Caco-2 (cell line): ENCODE measurements at regions of chr20 and their contacts with region 1.

Region 1: DNA sequence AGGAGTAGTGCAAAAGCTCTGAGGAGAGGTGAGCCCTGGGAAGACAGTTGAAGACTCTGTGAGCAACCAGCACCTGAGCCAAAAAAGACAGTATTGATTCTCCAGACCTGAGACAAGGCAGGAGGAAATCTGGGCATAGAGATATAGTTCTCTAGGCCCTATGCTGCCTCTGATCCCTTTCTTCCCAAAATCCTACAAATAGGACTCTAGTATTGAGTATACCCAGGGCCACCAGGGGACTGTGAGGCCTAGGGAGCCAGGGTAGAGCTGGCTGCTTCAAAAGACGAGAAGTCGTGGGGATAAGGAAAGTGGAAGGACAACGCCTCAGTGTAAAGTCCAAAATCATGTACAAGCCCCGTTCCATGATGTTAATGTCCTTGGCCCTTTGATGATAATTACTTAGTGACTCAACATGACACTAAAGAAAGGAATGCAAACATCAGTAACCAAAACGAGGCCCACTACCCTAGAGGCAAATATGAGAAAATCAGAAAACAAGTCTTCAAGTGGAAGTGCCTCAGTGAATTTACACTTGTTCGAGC is 197.3 kb upstream of the PROKR2 start:
- DNase-seq: peak; percentile 84 to 89
- H3K4me3 ChIP-seq: no peak overlapping the region
- H3K4me3 Mint-ChIP-seq: peak overlapping the region; percentile 55
- H3K27ac Mint-ChIP-seq: peak overlapping the region; percentile 95
- H3K4me1 ChIP-seq: peaks cover 27% of the 10 kb centered on the region
- H3K4me1 Mint-ChIP-seq: peaks cover 8% of the 10 kb centered on the region
- H3K27me3 ChIP-seq: no peaks in the 10 kb centered on the region
- H3K27me3 Mint-ChIP-seq: no peaks in the 10 kb centered on the region
- CTCF ChIP-seq: peak in 1 of 2 experiments; percentile 35

Region 2: DNA sequence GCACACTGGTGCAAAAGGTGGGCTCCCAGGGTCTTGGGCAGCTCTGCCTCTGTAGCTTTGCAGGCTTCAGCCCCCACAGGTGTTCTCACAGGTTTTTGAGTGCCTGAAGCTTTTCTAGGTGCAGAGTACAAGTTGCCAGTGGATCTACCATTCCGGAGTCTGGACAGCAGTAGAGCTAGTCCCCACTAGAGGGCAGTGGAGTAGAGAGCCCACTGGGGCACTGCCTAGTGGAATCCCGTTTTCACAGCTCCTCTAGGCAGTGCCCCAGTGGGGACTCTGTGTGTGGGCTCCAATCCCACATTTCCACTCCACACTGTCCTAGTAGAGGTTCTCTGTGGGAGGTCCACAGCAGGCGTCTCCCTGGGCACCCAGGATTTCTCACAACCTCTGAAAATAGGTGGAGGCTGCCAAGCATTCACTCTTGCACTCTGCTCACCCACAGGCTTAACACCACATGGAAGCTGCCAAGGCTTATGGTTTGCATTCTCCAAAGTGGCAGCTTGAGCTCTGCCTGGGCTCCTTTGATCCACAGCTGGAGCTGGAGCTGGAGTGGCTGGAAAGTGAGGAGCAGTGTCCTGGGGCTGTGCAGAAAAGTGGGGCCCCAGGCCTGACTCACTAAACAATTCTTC is 111.0 kb before region 1 on chr20:
- CTCF ChIA-PET with region 1: interaction called, 10 read pairs
- POLR2A ChIA-PET with region 1: no interaction called
- intact Hi-C with region 1: no loop called
- DNase-seq: peak; percentile 54 to 67
- H3K4me3 ChIP-seq: no peak overlapping the region
- H3K4me3 Mint-ChIP-seq: no peak overlapping the region
- H3K27ac Mint-ChIP-seq: no peak overlapping the region
- H3K4me1 ChIP-seq: no peaks in the 10 kb centered on the region
- H3K4me1 Mint-ChIP-seq: no peaks in the 10 kb centered on the region
- H3K27me3 ChIP-seq: no peaks in the 10 kb centered on the region; the same call in 1 of the 2 replicates
- H3K27me3 Mint-ChIP-seq: peaks cover 4% of the 10 kb centered on the region
- CTCF ChIP-seq: peak; percentile 66 to 80